ENCODE measurements at regions of chr11 and their contacts with region 1.

Region 1: DNA sequence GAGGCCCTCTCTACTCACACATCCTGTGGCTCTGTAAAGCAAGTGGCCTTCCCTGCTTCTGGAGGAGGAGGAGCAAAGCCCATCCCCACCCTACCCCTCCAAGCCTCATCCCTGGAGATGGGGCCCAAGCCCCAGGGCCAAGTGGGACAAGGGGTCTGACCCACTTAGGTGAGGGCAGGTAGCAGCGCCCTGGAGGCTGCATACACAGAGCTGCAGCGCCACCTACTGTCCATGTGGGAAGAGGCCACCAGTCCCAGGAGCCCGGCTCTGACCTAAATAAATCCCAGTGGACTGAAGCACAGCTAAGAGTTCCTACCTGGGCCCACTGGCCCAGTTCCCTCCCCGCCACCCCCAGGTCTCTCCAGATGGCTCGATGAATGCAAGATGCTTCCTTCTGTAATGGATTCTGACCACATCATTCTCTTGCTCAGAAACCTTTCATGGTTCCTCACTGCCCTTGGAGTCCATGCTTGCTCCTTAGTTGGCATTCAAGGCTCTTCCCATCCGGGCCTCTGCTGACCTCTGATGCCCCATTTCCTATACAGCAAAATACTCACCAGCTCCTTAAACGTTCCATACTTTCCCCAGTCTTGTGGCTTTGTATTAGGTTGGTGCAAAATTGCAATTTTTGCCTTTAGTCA is 62.1 kb downstream of the THAP12 start:
- DNase-seq: peak; percentile 58 to 82
- H3K4me3 ChIP-seq: no peak overlapping the region
- H3K27ac ChIP-seq: no peak overlapping the region
- H3K4me1 ChIP-seq: 0 out of 2 replicates have a peak, but pooled peaks cover 6% of the 10 kb centered on the region
- H3K27me3 ChIP-seq: no peaks in the 10 kb centered on the region
- CTCF ChIP-seq: peak; percentile 99

Region 2: GRCh38 chr11:75547580-75548058 is 771.2 kb before region 1 on chr11:
- CTCF ChIA-PET with region 1: no interaction called
- POLR2A ChIA-PET with region 1: no interaction called
- intact Hi-C with region 1: loop called (anchors 5 kb)
- DNase-seq: peak; percentile 61 to 72
- H3K4me3 ChIP-seq: no peak overlapping the region
- H3K27ac ChIP-seq: no peak overlapping the region
- H3K4me1 ChIP-seq: no peaks in the 10 kb centered on the region
- H3K27me3 ChIP-seq: no peaks in the 10 kb centered on the region
- CTCF ChIP-seq: peak; percentile 98

Region 3: DNA sequence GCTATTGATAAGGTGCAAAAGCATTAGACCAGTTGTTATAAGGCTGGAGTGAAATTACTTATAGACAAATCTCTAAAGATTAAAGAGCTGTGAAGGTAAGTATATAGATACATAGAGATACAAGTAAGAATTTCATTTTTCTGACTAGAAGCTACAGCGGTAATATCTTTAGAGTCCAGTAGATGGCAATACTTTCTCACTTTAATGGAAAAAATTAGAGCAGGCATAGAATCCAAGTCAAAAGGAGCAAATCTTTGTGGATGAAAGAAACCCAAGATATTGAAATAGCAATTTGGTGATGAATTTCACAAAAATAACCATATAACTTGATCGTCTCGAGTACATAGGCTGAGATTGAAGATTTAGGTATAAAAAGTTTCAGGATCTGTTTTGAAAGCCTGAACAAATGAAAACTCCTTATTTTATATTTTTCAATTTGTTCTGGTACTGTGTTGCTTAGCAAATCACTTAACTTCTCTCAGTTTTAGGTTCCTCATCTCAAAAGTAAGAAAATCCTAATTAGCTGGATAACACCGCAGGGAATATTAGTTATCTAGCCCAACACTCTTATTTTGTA is 421.9 kb before region 1 on chr11:
- CTCF ChIA-PET with region 1: interaction called, 7 read pairs
- POLR2A ChIA-PET with region 1: no interaction called
- intact Hi-C with region 1: loop called (anchors 2 kb)
- DNase-seq: peak in 1 of 2 experiments; percentile 64
- H3K4me3 ChIP-seq: no peak overlapping the region
- H3K27ac ChIP-seq: no peak overlapping the region
- H3K4me1 ChIP-seq: no peaks in the 10 kb centered on the region
- H3K27me3 ChIP-seq: no peaks in the 10 kb centered on the region
- CTCF ChIP-seq: peak; percentile 95

Region 4: DNA sequence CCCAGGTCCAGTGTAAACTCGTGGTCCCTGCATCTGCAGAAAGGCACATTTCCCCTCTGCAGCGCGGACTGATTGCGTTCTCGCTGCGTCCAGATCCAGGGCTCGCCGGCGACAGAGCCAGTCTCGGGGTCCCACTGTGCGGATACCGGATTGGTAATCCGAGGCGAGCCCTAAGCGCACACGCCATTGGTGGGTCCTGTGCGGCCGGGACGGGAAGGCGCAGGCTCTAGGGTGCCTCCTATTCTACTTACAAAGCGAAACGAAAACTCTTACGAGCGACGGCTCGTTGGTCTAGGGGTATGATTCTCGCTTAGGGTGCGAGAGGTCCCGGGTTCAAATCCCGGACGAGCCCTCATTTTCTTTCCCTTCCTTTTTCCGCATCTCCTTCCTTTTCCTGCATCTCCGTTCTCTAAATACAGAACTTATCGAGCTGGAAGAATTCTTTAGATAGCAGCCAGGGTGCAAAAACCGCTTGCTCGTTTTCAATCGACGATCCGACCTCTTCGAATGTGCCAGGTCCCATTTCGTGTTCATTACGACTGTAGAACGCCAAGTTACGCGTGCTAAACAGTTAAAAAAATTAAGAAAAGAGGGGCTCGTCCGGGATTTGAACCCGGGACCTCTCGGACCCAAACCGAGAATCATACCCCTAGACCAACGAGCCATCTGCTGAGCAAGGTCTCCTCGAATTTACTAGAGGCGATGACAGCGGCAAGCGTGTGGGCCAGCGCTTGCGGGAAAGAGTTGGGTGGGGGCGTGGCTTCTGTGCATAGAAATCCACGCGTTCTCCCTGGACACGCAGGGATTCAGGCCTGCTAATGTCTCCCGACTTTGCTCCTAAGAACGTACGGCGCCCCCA is 83.4 kb before region 1 on chr11:
- CTCF ChIA-PET with region 1: no interaction called
- POLR2A ChIA-PET with region 1: interaction called, 3 read pairs
- intact Hi-C with region 1: loop called (anchors 1 kb)
- DNase-seq: peak; percentile 86 to 92
- H3K4me3 ChIP-seq: peak overlapping the region; percentile 66
- H3K27ac ChIP-seq: peak overlapping the region; percentile 48
- H3K4me1 ChIP-seq: peaks cover 14% of the 10 kb centered on the region
- H3K27me3 ChIP-seq: no peaks in the 10 kb centered on the region
- CTCF ChIP-seq: no peak

Region 5: DNA sequence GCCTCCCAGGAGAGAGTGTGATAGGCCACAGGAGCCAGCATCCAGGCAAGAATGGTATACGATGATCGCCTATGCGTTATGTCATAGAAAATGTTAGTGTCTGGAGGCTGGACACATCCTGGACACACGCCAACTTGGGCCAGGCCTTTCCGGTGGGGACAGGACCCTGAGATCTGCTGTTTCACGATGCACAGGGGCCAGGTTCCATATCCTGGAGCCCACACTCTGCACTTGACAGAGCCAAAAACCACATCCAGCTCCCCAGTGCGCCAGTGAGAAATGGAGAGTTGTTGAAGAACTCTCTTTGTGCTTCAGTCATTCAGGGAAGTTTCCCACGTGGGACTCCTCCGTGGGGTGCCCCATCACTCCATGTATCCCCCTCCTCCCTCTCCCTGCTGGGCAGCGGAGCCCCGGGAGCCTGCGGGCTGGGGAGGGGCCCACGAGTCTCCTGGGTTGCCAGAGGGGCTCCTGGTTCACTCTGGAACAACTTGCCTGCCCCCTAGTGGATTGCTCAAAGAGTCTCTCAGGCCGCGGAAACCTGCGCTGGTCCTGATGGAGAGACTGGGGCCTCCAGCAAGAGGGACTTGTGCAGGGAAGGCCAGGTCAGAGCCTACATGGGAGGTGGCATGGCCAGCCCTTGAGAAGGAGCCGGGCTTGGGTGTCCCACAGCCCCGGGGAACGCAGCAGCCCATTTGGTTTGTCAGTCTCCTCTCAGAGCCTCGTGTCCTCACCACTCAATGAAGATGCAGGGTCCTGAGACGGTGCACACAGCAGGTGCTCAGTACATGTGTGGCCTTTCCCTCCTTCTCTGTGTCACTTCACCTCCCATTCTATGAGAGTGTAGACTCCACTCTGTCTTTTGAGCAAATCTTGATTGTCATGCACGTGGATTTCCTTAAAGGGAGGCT is 361.9 kb after region 1 on chr11:
- CTCF ChIA-PET with region 1: no interaction called
- POLR2A ChIA-PET with region 1: no interaction called
- intact Hi-C with region 1: loop called (anchors 5 kb)
- DNase-seq: peak; percentile 54 to 68
- H3K4me3 ChIP-seq: no peak overlapping the region
- H3K27ac ChIP-seq: no peak overlapping the region
- H3K4me1 ChIP-seq: no peaks in the 10 kb centered on the region; the same call in 1 of the 2 replicates
- H3K27me3 ChIP-seq: no peaks in the 10 kb centered on the region
- CTCF ChIP-seq: peak; percentile 95

Region 6: DNA sequence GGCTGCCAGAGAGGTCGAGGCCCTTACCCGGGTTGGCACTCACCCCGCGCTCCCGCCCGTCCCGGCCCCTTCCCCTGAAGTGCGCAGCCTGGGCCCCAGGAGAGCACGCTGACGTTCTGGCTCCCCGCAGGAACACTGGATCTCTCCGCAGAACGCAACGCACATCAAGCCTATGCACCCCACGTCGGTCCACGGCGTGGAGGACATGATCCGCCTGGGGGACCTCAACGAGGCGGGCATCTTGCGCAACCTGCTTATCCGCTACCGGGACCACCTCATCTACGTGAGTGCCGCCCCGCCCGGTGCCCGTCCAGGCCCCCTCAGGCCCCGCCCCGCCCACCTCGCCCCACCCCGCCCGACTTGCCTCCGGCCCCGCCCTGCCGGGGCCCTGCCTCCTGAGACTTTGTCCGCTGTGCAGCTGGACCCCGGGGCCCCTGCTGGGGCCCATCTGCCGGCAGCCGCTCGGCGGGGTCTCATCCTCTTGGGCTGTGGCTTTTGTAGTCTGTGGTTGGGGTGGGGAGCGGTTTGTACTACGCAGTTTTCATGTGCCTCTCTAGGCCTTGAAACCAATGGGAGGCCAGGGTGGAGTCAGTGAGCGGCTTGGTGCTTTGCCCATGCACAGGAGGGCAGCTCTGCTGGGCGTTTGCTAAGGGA is 828.9 kb after region 1 on chr11:
- CTCF ChIA-PET with region 1: no interaction called
- POLR2A ChIA-PET with region 1: no interaction called
- intact Hi-C with region 1: no loop called
- DNase-seq: no peak
- H3K4me3 ChIP-seq: no peak overlapping the region
- H3K27ac ChIP-seq: no peak overlapping the region
- H3K4me1 ChIP-seq: no peaks in the 10 kb centered on the region
- H3K27me3 ChIP-seq: peaks cover 47% of the 10 kb centered on the region
- CTCF ChIP-seq: no peak